CD8-positive, alpha-beta T cell (primary cell): ENCODE measurements at regions of chr12 and their contacts with region 1.

Region 1: DNA sequence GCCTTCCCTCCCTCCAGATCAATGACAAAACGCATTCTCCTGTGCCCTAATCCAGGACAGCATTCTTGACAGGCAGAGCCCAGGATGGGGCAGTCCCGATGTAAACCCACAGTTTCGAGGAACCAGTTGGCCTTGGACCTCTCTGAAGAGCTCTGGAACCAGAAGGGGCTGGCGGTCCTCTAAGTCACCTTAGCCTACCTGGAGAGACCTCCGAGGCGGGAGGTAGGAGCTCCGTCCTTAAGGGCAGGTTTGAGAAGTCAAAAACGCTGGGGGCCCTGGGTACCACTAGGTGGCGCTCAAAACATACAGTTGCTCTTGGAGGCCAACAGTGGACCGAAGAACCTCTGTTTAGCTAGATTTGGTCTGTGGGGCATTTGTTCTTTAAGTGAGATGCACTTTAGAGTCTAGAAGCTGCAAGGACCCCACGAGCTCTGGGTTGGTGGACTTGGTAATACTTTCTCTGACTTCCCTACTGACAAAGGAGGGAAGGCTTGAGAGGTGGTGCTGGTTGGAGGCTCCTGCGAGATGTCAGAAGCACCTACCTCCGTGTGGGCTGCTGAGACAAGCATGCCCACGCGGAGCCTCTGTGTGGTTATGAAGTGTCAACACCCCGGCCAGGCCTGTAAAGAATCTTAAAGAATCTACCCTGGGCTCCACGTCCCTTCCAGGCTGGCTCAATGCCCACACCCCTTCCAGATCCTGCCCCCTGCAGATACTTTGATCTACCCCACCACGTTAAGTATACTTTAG is 74.8 kb upstream of the CHST11 start:
- DNase-seq: peak; percentile 60 to 91 (median 83)
- ATAC-seq: peak; percentile 93
- H3K4me3 ChIP-seq: no peak overlapping the region
- H3K4me3 Mint-ChIP-seq: no peak overlapping the region
- H3K27ac ChIP-seq: no peak overlapping the region
- H3K27ac Mint-ChIP-seq: no peak overlapping the region
- H3K4me1 ChIP-seq: no peaks in the 10 kb centered on the region
- H3K4me1 Mint-ChIP-seq: peaks cover 8% of the 10 kb centered on the region
- H3K27me3 ChIP-seq: peaks cover 0 to 2% of the 10 kb centered on the region in 2 experiments
- H3K27me3 Mint-ChIP-seq: peaks cover 9% of the 10 kb centered on the region
- CTCF ChIP-seq: peak; percentile 89

Region 2: DNA sequence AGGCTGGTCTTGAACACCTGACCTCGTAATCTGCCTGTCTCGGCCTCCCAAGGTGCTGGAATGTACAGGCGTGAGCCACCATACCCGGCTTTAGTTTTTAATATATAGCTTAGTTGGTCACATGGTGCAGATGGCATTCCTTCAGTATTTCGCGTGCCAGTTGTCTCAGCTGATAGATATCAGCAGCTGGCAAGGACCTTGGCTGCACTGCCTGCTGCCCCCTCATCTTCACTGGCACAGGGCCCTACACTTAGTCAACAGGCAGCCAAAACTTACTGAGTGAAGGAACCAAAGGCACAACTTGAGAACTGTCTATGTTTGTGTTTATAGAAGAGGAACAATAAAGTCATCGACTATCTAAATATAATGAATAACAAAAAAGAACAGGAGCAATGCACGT is 47.3 kb before region 1 on chr12:
- CTCF ChIA-PET with region 1: no interaction called
- POLR2A ChIA-PET with region 1: no interaction called
- intact Hi-C with region 1: no loop called
- DNase-seq: no peak
- ATAC-seq: no peak
- H3K4me3 ChIP-seq: no peak overlapping the region
- H3K4me3 Mint-ChIP-seq: no peak overlapping the region
- H3K27ac ChIP-seq: no peak overlapping the region
- H3K27ac Mint-ChIP-seq: no peak overlapping the region
- H3K4me1 ChIP-seq: no peaks in the 10 kb centered on the region
- H3K4me1 Mint-ChIP-seq: no peaks in the 10 kb centered on the region
- H3K27me3 ChIP-seq: no peaks in the 10 kb centered on the region
- H3K27me3 Mint-ChIP-seq: no peaks in the 10 kb centered on the region
- CTCF ChIP-seq: no peak

Region 3: DNA sequence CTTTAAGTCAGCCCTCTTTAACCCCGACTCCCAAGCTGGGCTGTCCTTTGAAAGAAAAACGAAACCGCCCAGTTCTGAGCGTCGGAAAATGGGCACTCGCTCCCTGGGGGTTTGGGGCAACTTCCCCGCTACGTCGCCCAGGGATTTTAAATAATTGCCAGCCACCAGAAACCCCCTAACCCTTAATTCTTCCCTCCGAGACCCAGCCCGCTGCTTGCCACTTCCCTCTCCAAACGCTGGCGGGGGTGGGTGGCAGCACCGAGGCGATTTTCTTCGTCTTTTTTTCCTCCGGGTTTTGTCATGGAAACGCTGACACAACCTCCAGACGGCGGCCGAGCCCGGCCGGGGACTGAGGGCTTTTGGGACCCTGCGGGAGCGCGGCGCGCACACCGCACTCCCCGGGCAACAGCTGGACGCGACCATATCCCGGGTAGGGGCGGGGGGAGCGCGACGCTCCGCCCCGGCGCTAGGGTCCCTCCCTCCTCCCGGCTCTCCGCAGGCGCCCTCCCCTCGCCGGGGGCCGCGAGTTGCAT is 74.6 kb after region 1 on chr12 and contains the start of gene CHST11:
- CTCF ChIA-PET with region 1: interaction called, 15 read pairs
- POLR2A ChIA-PET with region 1: no interaction called
- intact Hi-C with region 1: loop called in 1 of 2 experiments (anchors 5 kb)
- DNase-seq: peak; percentile 40 to 88 (median 72)
- ATAC-seq: peak; percentile 64
- H3K4me3 ChIP-seq: peak within 1 kb of the TSS; percentile 88 to 97
- H3K4me3 Mint-ChIP-seq: peak within 1 kb of the TSS; percentile 99
- H3K27ac ChIP-seq: peak within 1 kb of the TSS; percentile 70 to 82
- H3K27ac Mint-ChIP-seq: peak within 1 kb of the TSS; percentile 96
- H3K4me1 ChIP-seq: peaks cover 39% of the 10 kb centered on the region
- H3K4me1 Mint-ChIP-seq: peaks cover 42% of the 10 kb centered on the region
- H3K27me3 ChIP-seq: no peaks in the 10 kb centered on the region
- H3K27me3 Mint-ChIP-seq: no peaks in the 10 kb centered on the region
- CTCF ChIP-seq: no peak
- total RNA-seq, gene CHST11: 29.1 to 35.5 TPM

Region 4: DNA sequence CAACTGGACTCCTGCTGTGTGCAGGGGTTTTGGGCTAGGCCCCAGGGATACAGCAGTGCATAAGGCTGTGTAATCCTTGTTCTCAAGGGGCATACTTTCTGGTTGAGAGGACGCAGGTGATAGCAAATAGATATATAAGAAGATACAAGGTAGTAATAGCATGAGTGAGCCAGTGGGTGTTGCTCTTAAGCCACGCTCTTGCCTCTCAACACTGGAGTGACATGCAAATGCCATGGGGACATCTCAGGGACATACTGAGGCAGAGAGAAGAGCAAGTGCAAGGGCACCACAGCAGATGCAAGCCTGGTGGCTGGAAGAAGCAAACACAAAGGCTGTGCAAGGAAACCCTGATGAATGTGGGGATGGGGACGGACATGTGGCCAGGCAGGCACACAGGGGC is 298.2 kb after region 1 on chr12:
- CTCF ChIA-PET with region 1: interaction called, 9 read pairs
- POLR2A ChIA-PET with region 1: no interaction called
- intact Hi-C with region 1: loop called (anchors 1 to 5 kb)
- DNase-seq: peak in 5 of 9 experiments; percentile 22 to 70 (median 58)
- ATAC-seq: peak; percentile 48
- H3K4me3 ChIP-seq: no peak overlapping the region
- H3K4me3 Mint-ChIP-seq: no peak overlapping the region
- H3K27ac ChIP-seq: no peak overlapping the region
- H3K27ac Mint-ChIP-seq: no peak overlapping the region
- H3K4me1 ChIP-seq: peaks cover 34% of the 10 kb centered on the region
- H3K4me1 Mint-ChIP-seq: peaks cover 56% of the 10 kb centered on the region
- H3K27me3 ChIP-seq: no peaks in the 10 kb centered on the region
- H3K27me3 Mint-ChIP-seq: no peaks in the 10 kb centered on the region
- CTCF ChIP-seq: peak; percentile 46

Region 5: DNA sequence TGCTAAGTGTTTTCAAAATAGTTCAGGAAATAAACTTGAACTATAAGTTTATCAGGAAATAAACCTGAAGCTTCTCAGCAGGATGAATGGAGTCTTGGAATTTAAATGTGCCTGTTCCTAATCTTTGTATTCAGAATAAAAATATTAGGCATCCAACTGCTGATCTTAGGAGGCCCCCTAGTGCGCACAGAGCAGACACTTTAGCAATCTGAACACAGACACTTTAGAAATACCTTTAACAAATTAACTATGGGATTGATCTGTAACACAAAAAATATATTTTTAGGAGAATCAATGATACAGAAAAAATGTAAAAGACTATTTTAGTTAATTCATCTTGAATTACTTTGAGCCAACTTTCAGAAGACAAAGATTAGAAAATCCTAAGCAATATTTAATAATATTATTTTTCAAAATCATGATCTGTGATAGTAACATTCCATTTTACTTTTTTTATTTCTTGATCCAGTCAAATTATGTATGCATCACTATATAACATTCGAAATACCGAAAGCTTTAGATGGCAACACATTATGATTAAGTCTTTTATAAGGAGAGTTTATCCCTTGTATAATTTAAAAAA is 495.3 kb after region 1 on chr12:
- CTCF ChIA-PET with region 1: interaction called, 53 read pairs
- POLR2A ChIA-PET with region 1: interaction called, 5 read pairs
- intact Hi-C with region 1: loop called (anchors 1 kb)
- DNase-seq: peak; percentile 3 to 60 (median 31)
- ATAC-seq: no peak
- H3K4me3 ChIP-seq: no peak overlapping the region
- H3K4me3 Mint-ChIP-seq: no peak overlapping the region
- H3K27ac ChIP-seq: no peak overlapping the region
- H3K27ac Mint-ChIP-seq: no peak overlapping the region
- H3K4me1 ChIP-seq: no peaks in the 10 kb centered on the region
- H3K4me1 Mint-ChIP-seq: no peaks in the 10 kb centered on the region
- H3K27me3 ChIP-seq: no peaks in the 10 kb centered on the region
- H3K27me3 Mint-ChIP-seq: no peaks in the 10 kb centered on the region
- CTCF ChIP-seq: peak; percentile 83

Region 6: DNA sequence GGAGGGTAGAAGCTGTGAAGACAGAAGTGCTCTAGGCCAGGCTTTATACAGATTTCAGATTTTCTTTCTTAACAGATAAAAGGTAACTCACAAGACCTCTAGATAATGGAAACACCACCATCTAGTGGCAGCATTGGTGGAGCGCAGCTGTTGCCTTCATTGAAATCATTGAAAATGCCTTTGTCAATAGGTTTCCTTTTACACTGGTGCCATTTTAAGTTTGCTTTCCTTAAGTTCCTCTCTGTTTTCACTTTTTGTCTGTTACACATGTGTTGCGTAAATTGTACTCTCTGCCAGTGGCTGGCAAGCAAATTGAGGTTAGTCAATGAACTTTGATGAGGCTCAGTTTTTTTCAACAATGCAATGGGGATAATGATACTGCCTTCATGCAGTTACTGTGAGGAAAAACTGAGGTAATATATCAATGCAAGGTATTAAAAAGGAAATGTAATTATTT is 671.2 kb after region 1 on chr12:
- CTCF ChIA-PET with region 1: interaction called, 78 read pairs
- POLR2A ChIA-PET with region 1: no interaction called
- intact Hi-C with region 1: loop called in 1 of 2 experiments (anchors 1 kb)
- DNase-seq: peak; percentile 54 to 83 (median 72)
- ATAC-seq: peak; percentile 89
- H3K4me3 ChIP-seq: no peak overlapping the region
- H3K4me3 Mint-ChIP-seq: no peak overlapping the region
- H3K27ac ChIP-seq: no peak overlapping the region
- H3K27ac Mint-ChIP-seq: no peak overlapping the region
- H3K4me1 ChIP-seq: no peaks in the 10 kb centered on the region
- H3K4me1 Mint-ChIP-seq: no peaks in the 10 kb centered on the region
- H3K27me3 ChIP-seq: no peaks in the 10 kb centered on the region
- H3K27me3 Mint-ChIP-seq: peaks cover 2% of the 10 kb centered on the region
- CTCF ChIP-seq: peak; percentile 96